Transverse colon (tissue), 4 donors: ENCODE measurements at regions of chr3 and their contacts with region 1.

Region 1: DNA sequence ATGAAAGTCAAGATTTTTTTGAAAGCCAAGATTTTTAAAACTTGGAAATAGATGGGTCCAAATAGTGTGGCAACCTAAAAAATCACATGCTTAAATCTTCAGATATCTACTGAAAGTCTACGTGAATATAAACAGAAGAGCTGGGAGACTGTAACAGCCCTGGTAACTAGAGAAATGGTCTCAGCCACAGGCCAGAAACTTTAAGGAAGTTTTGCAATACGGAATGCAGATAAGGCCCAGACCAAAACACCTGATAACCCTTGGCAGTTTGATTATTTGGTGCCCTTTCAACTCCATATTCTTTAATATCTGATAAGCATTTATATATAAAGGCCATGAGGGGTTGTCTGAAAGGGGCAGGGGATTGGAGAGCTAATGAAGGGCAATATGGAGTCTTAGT is 537.3 kb upstream of the TGFBR2 start:
- DNase-seq: no peak
- H3K4me3 ChIP-seq: no peak overlapping the region
- H3K27ac ChIP-seq: no peak overlapping the region
- H3K4me1 ChIP-seq: peaks cover 0 to 12% (median 3%) of the 10 kb centered on the region in 4 donors
- H3K27me3 ChIP-seq: no peaks in the 10 kb centered on the region
- CTCF ChIP-seq: no peak
- EP300 ChIP-seq: no peak
- POLR2A ChIP-seq: no peak

Region 2: DNA sequence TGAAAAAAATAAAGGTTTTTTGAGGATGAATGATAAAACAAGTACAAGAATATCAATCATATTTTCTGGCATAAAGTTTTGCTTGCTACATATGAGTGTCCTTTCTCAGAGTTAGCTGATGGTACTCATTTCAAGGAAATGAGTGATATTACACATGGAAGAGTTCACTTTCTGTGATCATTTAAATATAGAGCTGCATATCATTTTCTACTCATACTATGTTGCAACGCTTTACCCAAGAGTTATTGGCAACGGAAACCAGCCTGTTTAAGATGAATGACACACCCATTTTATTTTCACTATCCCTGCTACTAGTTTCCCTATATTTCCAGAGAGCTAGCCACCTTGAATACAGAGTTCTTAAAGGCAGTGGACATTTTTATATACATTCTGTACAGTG is 823.6 kb before region 1 on chr3:
- in situ Hi-C with region 1: no loop called
- intact Hi-C with region 1: no loop called
- DNase-seq: no peak
- H3K4me3 ChIP-seq: no peak overlapping the region
- H3K27ac ChIP-seq: no peak overlapping the region
- H3K4me1 ChIP-seq: no peaks in the 10 kb centered on the region
- H3K27me3 ChIP-seq: no peaks in the 10 kb centered on the region
- CTCF ChIP-seq: no peak
- EP300 ChIP-seq: no peak
- POLR2A ChIP-seq: no peak

Region 3: GRCh38 chr3:31294430-31295149 is 1225.5 kb after region 1 on chr3:
- in situ Hi-C with region 1: no loop called
- intact Hi-C with region 1: loop called (anchors 5 kb)
- DNase-seq: no peak
- H3K4me3 ChIP-seq: no peak overlapping the region
- H3K27ac ChIP-seq: no peak overlapping the region
- H3K4me1 ChIP-seq: no peaks in the 10 kb centered on the region
- H3K27me3 ChIP-seq: no peaks in the 10 kb centered on the region
- CTCF ChIP-seq: no peak
- EP300 ChIP-seq: no peak
- POLR2A ChIP-seq: no peak